Natural killer cell (primary cell): ENCODE measurements at regions of chr16 and their contacts with region 1.

Region 1: GRCh38 chr16:28846080-28846932 is at the start of gene TUFM:
- DNase-seq: peak; percentile 97 to 99
- ATAC-seq: peak; percentile 96 to 99 (median 96)
- H3K4me3 ChIP-seq: peak within 1 kb of the TSS; percentile 98
- H3K4me3 Mint-ChIP-seq: peak within 1 kb of the TSS; percentile 97
- H3K27ac ChIP-seq: peak within 1 kb of the TSS; percentile 92
- H3K27ac Mint-ChIP-seq: peak within 1 kb of the TSS; percentile 95 to 99
- H3K4me1 ChIP-seq: peaks cover 30% of the 10 kb centered on the region
- H3K4me1 Mint-ChIP-seq: peaks cover 25 to 32% of the 10 kb centered on the region in 2 donors
- H3K27me3 ChIP-seq: no peaks in the 10 kb centered on the region
- H3K27me3 Mint-ChIP-seq: no peaks in the 10 kb centered on the region
- CTCF ChIP-seq: peak; percentile 71
- total RNA-seq, gene TUFM: 108 to 128 (median 118) TPM

Region 2: GRCh38 chr16:28863929-28864793 is 17.9 kb after region 1 on chr16:
- intact Hi-C with region 1: loop called (anchors 2 kb)
- DNase-seq: peak in 1 of 2 donors; percentile 67
- ATAC-seq: no peak
- H3K4me3 ChIP-seq: peak overlapping the region; percentile 99
- H3K4me3 Mint-ChIP-seq: peak overlapping the region; percentile 98
- H3K27ac ChIP-seq: peak overlapping the region; percentile 98
- H3K27ac Mint-ChIP-seq: peak overlapping the region; percentile 95 to 96
- H3K4me1 ChIP-seq: peaks cover 29% of the 10 kb centered on the region
- H3K4me1 Mint-ChIP-seq: peaks cover 18 to 40% of the 10 kb centered on the region in 2 donors
- H3K27me3 ChIP-seq: no peaks in the 10 kb centered on the region
- H3K27me3 Mint-ChIP-seq: no peaks in the 10 kb centered on the region
- CTCF ChIP-seq: no peak

Region 3: GRCh38 chr16:29310852-29311314 is 464.6 kb after region 1 on chr16:
- intact Hi-C with region 1: no loop called
- DNase-seq: no peak
- ATAC-seq: no peak
- H3K4me3 ChIP-seq: no peak overlapping the region
- H3K4me3 Mint-ChIP-seq: no peak overlapping the region
- H3K27ac ChIP-seq: no peak overlapping the region
- H3K27ac Mint-ChIP-seq: no peak overlapping the region
- H3K4me1 ChIP-seq: peaks cover 22% of the 10 kb centered on the region
- H3K4me1 Mint-ChIP-seq: peaks cover 32% of the 10 kb centered on the region in 2 donors
- H3K27me3 ChIP-seq: no peaks in the 10 kb centered on the region
- H3K27me3 Mint-ChIP-seq: no peaks in the 10 kb centered on the region
- CTCF ChIP-seq: no peak